ENCODE measurements at regions of chr1 and their contacts with region 1.

Region 1: DNA sequence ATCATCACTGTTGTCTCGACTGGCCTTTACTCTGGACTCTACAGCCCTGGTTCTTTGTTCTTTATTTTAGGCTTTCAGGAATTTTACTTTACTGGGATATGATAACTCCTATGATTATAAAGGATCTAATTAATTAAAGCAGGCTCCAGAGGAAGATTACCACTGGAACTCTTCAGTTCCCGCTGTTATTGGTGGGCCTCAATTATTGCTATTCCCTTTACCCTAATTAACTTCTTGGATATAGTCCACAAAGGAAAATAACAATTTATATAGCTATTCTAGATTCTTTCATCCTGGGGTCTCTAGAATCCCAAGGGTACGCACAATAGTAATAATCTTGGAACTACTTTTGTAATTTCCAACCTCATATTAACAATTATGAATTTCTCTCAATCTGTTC is 8.5 kb upstream of the OVAAL start:
- DNase-seq: no peak
- H3K4me3 Mint-ChIP-seq: no peak overlapping the region
- H3K27ac Mint-ChIP-seq: no peak overlapping the region
- H3K4me1 Mint-ChIP-seq: no peaks in the 10 kb centered on the region
- H3K27me3 Mint-ChIP-seq: no peaks in the 10 kb centered on the region
- CTCF ChIP-seq: no peak

Region 2: DNA sequence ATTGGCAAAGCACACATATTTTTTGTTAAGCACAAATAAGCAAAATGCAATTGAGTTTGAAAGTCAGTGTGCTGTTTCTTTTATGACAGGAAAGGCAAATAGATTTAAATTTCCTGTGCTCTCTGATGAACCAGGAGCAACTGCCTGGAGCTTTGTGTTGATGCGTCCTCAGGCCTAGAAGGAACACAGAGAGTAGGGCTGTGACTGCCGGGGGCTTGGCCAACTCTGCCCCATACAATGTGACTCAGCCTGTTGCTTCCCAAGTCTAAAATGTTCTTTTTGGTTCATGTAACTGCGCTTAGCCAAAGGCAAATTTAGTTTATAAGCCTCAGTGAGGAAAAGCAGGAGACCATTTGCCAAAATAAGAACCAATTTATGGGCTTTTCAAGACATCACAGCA is 710.1 kb before region 1 on chr1:
- CTCF ChIA-PET with region 1: no interaction called
- POLR2A ChIA-PET with region 1: no interaction called
- intact Hi-C with region 1: no loop called
- DNase-seq: no peak
- H3K4me3 Mint-ChIP-seq: no peak overlapping the region
- H3K27ac Mint-ChIP-seq: no peak overlapping the region
- H3K4me1 Mint-ChIP-seq: no peaks in the 10 kb centered on the region
- H3K27me3 Mint-ChIP-seq: no peaks in the 10 kb centered on the region
- CTCF ChIP-seq: no peak

Region 3: DNA sequence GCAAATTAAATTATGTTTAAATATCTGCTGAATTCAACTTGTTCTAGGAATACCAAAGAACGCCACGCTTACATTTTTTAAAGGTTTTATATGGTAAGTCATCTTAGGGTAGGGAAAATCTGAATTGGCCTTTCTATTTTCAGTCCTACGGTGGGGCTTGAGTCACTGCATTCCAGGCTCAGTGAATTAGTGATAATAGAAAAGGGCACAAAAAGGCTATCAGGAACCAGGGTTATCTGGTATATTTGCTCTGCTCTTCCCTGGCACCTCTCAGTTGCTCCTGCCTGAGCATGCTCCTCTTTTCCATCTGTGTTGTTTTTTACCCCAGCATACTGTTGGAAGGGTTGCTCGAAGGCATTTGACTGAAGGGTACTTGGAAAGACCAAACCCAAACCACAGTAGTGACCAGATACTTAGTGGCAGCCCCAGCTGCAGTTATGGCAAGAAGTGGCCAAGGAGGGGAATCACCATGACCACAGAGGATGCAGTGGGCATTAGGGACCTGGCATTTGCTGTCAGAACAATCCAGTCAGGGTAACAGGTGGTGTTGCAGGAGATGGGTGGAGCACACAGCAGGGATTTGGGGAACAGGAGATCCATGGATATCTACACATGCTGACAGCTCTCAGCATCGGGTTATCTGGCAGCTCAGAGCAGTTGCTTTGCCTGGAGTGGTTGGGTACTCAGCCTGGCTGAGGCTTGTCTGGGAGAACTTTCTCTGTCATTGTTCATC is 10.8 kb after region 1 on chr1:
- CTCF ChIA-PET with region 1: interaction called, 11 read pairs
- POLR2A ChIA-PET with region 1: interaction called, 3 read pairs
- intact Hi-C with region 1: no loop called
- DNase-seq: no peak
- H3K4me3 Mint-ChIP-seq: no peak overlapping the region
- H3K27ac Mint-ChIP-seq: no peak overlapping the region
- H3K4me1 Mint-ChIP-seq: peaks cover 24% of the 10 kb centered on the region
- H3K27me3 Mint-ChIP-seq: no peaks in the 10 kb centered on the region
- CTCF ChIP-seq: no peak